CD4-positive, alpha-beta memory T cell (primary cell): ENCODE measurements at regions of chr4 and their contacts with region 1.

Region 1: DNA sequence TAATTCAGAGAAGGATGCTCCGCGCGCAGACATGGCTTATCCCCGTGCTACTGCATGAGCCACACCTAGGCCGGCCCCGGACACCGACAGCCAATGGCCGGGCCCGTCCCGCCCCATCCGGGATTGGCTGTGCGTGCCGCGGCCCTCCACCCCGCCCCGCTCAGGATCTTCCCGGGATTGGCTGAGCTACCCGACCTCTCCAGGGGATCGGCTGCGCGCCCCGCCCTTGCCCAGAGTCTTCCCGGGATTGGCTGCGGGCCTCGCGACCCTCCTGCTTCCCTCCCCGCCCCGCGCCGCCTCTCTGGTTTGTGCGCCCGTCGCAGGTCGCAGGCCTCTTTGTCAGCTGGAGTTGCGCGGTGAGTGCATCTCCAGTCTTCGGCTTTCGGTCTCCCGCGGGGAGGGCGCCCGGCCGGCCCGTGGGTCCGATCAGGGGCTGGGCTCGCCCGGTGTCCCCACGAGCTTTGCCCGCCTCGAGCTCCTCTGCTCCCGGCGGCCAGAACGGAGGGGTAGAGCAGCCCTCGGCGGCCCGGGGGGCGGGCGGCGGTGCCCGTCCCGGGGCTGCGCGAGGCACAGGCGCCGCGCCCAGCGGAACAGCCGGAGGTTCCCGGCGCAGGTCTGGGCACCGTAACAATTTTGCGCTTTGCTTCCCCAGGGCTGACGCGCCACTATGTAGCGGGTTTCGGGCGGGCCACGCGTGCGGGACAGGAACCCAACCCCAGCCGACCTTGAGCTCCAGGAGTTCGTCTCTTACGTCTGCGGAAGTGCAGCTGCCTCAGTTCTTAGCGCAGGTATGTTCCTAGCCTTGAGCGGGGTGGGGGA is 38.8 kb downstream of the ERVMER34-1 start:
- DNase-seq: peak; percentile 96 to 97 (median 97)
- H3K4me3 ChIP-seq: peak overlapping the region; percentile 12 to 85
- H3K4me3 Mint-ChIP-seq: peak overlapping the region; percentile 91 to 97 (median 94)
- H3K27ac ChIP-seq: peak overlapping the region; percentile 85
- H3K27ac Mint-ChIP-seq: peak overlapping the region; percentile 96 to 99 (median 98)
- H3K4me1 ChIP-seq: peaks cover 41% of the 10 kb centered on the region
- H3K4me1 Mint-ChIP-seq: peaks cover 32 to 52% (median 45%) of the 10 kb centered on the region in 4 donors
- H3K27me3 ChIP-seq: no peaks in the 10 kb centered on the region
- H3K27me3 Mint-ChIP-seq: no peaks in the 10 kb centered on the region

Region 2: DNA sequence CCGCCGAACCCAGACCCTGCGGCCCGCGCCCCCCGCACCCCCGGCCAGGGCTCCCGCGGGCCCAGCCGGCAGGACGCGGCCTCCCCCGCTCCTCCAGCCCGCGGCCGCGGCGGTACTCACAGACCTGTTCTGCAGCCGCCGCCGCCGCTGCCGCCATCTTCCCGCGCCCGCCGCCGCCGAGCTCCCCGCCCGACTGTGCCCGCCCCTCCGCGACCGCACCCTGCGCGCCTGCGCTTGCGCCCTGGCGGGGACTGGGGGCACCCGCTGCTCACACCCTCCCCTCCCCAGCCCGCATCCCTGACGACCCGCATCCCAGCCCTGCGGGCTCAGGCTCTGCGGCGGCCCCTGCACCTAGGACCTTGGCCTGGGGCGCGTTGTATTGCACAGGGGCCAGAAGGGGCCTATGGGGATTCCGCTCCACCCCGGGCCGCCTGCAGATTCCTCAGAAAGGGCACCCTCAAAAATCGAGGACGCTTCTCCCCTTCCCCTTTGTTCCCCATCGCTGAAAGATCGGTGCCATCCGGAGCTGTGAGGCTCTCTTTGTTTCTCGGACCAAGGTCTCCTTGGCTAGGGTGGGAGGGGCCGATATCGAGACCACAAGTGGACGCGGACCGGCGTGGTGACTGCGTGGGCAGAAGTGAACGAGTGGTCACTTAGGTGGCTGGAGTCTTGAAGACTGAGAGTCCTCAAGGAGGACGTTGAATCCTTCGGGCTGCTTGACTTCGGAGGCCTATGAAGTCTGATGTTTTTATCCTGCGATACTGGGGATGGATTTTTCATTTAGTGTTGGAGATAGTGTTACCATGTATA is 674.1 kb before region 1 on chr4 and contains the start of gene SGCB:
- CTCF ChIA-PET with region 1: no interaction called
- POLR2A ChIA-PET with region 1: no interaction called
- intact Hi-C with region 1: loop called (anchors 5 kb)
- DNase-seq: peak; percentile 64 to 75 (median 68)
- H3K4me3 ChIP-seq: peak within 1 kb of the TSS; percentile 5 to 57
- H3K4me3 Mint-ChIP-seq: peak within 1 kb of the TSS; percentile 84 to 91 (median 88)
- H3K27ac ChIP-seq: no peak within 1 kb of the TSS
- H3K27ac Mint-ChIP-seq: peak within 1 kb of the TSS in 5 of 7 donors; percentile 71 to 82 (median 75)
- H3K4me1 ChIP-seq: peaks cover 10% of the 10 kb centered on the region
- H3K4me1 Mint-ChIP-seq: peaks cover 21 to 36% (median 28%) of the 10 kb centered on the region in 4 donors
- H3K27me3 ChIP-seq: no peaks in the 10 kb centered on the region
- H3K27me3 Mint-ChIP-seq: peaks cover 2 to 10% of the 10 kb centered on the region in 2 donors
- total RNA-seq, gene SGCB: 7.4 to 7.5 TPM

Region 3: GRCh38 chr4:52329894-52330293 is 382.5 kb before region 1 on chr4:
- CTCF ChIA-PET with region 1: no interaction called
- POLR2A ChIA-PET with region 1: no interaction called
- intact Hi-C with region 1: no loop called
- DNase-seq: no peak
- H3K4me3 ChIP-seq: no peak overlapping the region
- H3K4me3 Mint-ChIP-seq: no peak overlapping the region
- H3K27ac ChIP-seq: no peak overlapping the region
- H3K27ac Mint-ChIP-seq: no peak overlapping the region
- H3K4me1 ChIP-seq: no peaks in the 10 kb centered on the region
- H3K4me1 Mint-ChIP-seq: no peaks in the 10 kb centered on the region
- H3K27me3 ChIP-seq: no peaks in the 10 kb centered on the region
- H3K27me3 Mint-ChIP-seq: peaks cover 0 to 1% of the 10 kb centered on the region in 2 donors

Region 4: DNA sequence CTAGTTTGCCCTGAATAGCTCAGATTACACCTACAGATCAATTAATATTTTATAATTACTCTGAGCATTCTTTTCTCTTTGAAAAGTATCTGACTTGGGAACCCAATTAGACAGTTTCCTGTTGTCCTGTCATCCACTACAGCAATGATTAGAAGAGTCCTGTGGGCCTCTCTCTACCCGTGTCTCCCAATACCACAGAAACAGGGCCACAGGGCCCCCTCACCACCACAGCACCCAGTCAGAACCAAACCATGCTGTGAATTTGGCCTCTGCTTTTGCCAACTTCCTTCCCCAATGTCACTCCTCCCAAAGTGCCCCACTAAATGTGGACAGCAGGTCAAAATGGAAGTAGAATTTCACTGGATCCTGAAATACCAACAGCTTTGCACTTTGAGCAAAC is 63.5 kb before region 1 on chr4:
- CTCF ChIA-PET with region 1: no interaction called
- POLR2A ChIA-PET with region 1: interaction called, 19 read pairs
- intact Hi-C with region 1: no loop called
- DNase-seq: no peak
- H3K4me3 ChIP-seq: no peak overlapping the region
- H3K4me3 Mint-ChIP-seq: peak overlapping the region in 2 of 8 donors; percentile 11 to 32
- H3K27ac ChIP-seq: no peak overlapping the region
- H3K27ac Mint-ChIP-seq: peak overlapping the region in 2 of 7 donors; percentile 24 to 34
- H3K4me1 ChIP-seq: peaks cover 36% of the 10 kb centered on the region
- H3K4me1 Mint-ChIP-seq: peaks cover 47 to 74% (median 62%) of the 10 kb centered on the region in 4 donors
- H3K27me3 ChIP-seq: no peaks in the 10 kb centered on the region
- H3K27me3 Mint-ChIP-seq: no peaks in the 10 kb centered on the region

Region 5: DNA sequence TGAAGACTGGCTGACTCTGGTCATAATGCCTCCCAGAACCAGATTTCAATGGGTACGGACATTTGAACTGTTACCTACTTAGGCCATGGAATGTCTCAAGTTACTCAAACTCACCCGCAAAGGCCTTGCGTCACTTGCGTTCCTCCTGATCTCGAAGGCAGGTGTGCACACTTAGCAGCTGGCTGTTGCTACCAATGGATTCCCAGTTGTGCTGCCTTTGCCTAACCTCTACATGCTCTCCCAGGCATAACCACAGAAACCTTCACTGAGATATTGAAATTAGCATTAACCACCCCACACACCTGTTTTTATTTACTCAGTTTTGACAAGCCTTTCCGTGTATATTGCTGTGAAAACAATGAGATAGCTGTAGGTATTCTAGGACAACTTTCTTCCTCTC is 36.1 kb after region 1 on chr4:
- CTCF ChIA-PET with region 1: no interaction called
- POLR2A ChIA-PET with region 1: no interaction called
- intact Hi-C with region 1: no loop called
- DNase-seq: no peak
- H3K4me3 ChIP-seq: no peak overlapping the region
- H3K4me3 Mint-ChIP-seq: no peak overlapping the region
- H3K27ac ChIP-seq: no peak overlapping the region
- H3K27ac Mint-ChIP-seq: no peak overlapping the region
- H3K4me1 ChIP-seq: peaks cover 13% of the 10 kb centered on the region
- H3K4me1 Mint-ChIP-seq: peaks cover 0 to 20% (median 5%) of the 10 kb centered on the region in 4 donors
- H3K27me3 ChIP-seq: peaks cover 22% of the 10 kb centered on the region
- H3K27me3 Mint-ChIP-seq: peaks cover 28 to 45% of the 10 kb centered on the region in 2 donors

Region 6: GRCh38 chr4:52861879-52862616 is 149.7 kb after region 1 on chr4 and contains the start of gene RASL11B:
- CTCF ChIA-PET with region 1: no interaction called
- POLR2A ChIA-PET with region 1: interaction called, 7 read pairs
- intact Hi-C with region 1: loop called (anchors 2 kb)
- DNase-seq: peak; percentile 75 to 87 (median 82)
- H3K4me3 ChIP-seq: peak within 1 kb of the TSS in 1 of 2 donors; percentile 51
- H3K4me3 Mint-ChIP-seq: peak within 1 kb of the TSS; percentile 80 to 86 (median 82)
- H3K27ac ChIP-seq: no peak within 1 kb of the TSS
- H3K27ac Mint-ChIP-seq: peak within 1 kb of the TSS in 3 of 7 donors; percentile 8 to 71 (median 36)
- H3K4me1 ChIP-seq: peaks cover 13% of the 10 kb centered on the region
- H3K4me1 Mint-ChIP-seq: peaks cover 3 to 11% (median 6%) of the 10 kb centered on the region in 4 donors
- H3K27me3 ChIP-seq: peaks cover 7% of the 10 kb centered on the region
- H3K27me3 Mint-ChIP-seq: peaks cover 24 to 33% of the 10 kb centered on the region in 2 donors
- total RNA-seq, gene RASL11B: not detected

Region 7: GRCh38 chr4:54064295-54065111 is 1352.1 kb after region 1 on chr4 and contains the start of gene CHIC2:
- CTCF ChIA-PET with region 1: no interaction called
- POLR2A ChIA-PET with region 1: interaction called, 3 read pairs
- intact Hi-C with region 1: loop called (anchors 1 kb)
- DNase-seq: peak; percentile 96 to 99 (median 98)
- H3K4me3 ChIP-seq: peak within 1 kb of the TSS; percentile 87 to 88
- H3K4me3 Mint-ChIP-seq: peak within 1 kb of the TSS; percentile 90 to 99 (median 96)
- H3K27ac ChIP-seq: peak within 1 kb of the TSS; percentile 98
- H3K27ac Mint-ChIP-seq: peak within 1 kb of the TSS; percentile 94 to 99 (median 98)
- H3K4me1 ChIP-seq: peaks cover 47% of the 10 kb centered on the region
- H3K4me1 Mint-ChIP-seq: peaks cover 35 to 62% (median 45%) of the 10 kb centered on the region in 4 donors
- H3K27me3 ChIP-seq: no peaks in the 10 kb centered on the region
- H3K27me3 Mint-ChIP-seq: no peaks in the 10 kb centered on the region
- total RNA-seq, gene CHIC2: 45.3 to 46.6 TPM